ENCODE measurements at regions of chr11 and their contacts with region 1.

Region 1: GRCh38 chr11:101848262-101848661 is 66.5 kb upstream of the CEP126 start:
- DNase-seq: no peak
- H3K4me3 ChIP-seq: no peak overlapping the region
- H3K27ac ChIP-seq: no peak overlapping the region
- H3K4me1 ChIP-seq: no peaks in the 10 kb centered on the region
- H3K27me3 ChIP-seq: no peaks in the 10 kb centered on the region
- CTCF ChIP-seq: peak in 1 of 4 experiments; percentile 41
- EP300 ChIP-seq: no peak
- POLR2A ChIP-seq: no peak

Region 2: GRCh38 chr11:101456812-101457211 is 391.4 kb before region 1 on chr11:
- intact Hi-C with region 1: loop called (anchors 1 kb)
- DNase-seq: no peak
- H3K4me3 ChIP-seq: no peak overlapping the region
- H3K27ac ChIP-seq: no peak overlapping the region
- H3K4me1 ChIP-seq: peaks cover 0 to 6% (median 0%) of the 10 kb centered on the region in 4 donors
- H3K27me3 ChIP-seq: no peaks in the 10 kb centered on the region
- CTCF ChIP-seq: peak in 3 of 4 experiments; percentile 27 to 56 (median 29)
- EP300 ChIP-seq: no peak
- POLR2A ChIP-seq: no peak

Measured in sigmoid colon (tissue), 7 donors.